ENCODE measurements at regions of chr1 and their contacts with region 1.

Region 1: GRCh38 chr1:108816049-108816893 is 40.6 kb downstream of the AKNAD1 start:
- DNase-seq: peak; percentile 31 to 90
- H3K4me3 ChIP-seq: peak overlapping the region; percentile 48 to 52
- H3K27ac ChIP-seq: peak overlapping the region; percentile 83 to 86
- H3K4me1 ChIP-seq: peaks cover 4 to 17% of the 10 kb centered on the region in 2 donors
- H3K27me3 ChIP-seq: no peaks in the 10 kb centered on the region
- CTCF ChIP-seq: no peak

Region 2: GRCh38 chr1:108691942-108692723 is 124.1 kb before region 1 on chr1 and contains the start of gene PRPF38B:
- intact Hi-C with region 1: loop called (anchors 5 kb)
- DNase-seq: peak; percentile 80 to 97
- H3K4me3 ChIP-seq: peak within 1 kb of the TSS; percentile 82 to 98
- H3K27ac ChIP-seq: peak within 1 kb of the TSS; percentile 92 to 99
- H3K4me1 ChIP-seq: peaks cover 0 to 16% of the 10 kb centered on the region in 2 donors
- H3K27me3 ChIP-seq: no peaks in the 10 kb centered on the region
- CTCF ChIP-seq: no peak
- total RNA-seq, gene PRPF38B: 9.0 TPM

Region 3: DNA sequence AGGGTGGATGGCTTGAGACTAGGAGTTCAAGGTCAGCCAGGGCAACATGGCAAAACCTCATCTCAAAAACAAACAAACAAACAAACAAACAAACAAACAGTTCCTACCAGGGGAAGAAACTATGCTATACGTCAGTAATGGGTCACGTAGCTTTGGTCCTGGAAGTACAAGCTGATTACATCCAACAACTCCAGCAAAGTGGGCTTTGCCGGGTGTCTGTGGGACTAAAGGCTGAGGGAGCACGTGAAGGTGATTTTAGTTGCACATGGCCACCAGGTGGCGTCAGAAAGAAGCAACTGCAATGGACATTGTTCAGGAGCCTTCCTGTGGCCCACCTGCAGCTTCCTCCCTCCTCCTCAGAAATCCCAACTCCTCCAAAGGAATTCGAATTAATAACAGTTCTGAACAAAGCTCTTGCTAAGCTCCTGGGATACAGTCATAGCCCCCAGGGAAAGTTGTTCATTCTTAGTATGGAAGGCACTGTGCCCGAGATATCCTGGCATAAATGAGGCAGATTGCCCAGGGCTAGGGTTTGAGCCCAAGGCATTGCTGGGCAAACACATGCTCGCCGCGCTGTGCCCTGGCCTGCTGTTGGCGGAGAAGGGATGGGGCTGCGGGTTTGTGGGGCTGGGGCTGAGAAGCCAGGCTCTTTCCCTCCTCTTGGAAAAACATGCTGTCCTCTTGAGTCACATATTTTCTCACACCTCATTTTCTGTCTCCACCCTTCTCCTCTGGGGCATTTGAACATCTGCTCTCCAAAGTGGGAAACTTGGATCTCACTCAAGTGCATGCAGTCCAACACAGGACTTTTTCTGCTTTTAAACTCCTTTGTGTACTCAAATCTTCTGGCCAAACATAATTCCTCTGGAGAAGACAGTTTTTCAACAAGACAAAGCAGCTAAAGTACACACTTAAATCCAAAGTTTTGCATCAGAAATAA is 12.0 kb after region 1 on chr1:
- intact Hi-C with region 1: loop called (anchors 1 kb)
- DNase-seq: peak in 1 of 2 donors; percentile 90
- H3K4me3 ChIP-seq: peak overlapping the region in 1 of 2 donors; percentile 28
- H3K27ac ChIP-seq: peak overlapping the region; percentile 79 to 88
- H3K4me1 ChIP-seq: peaks cover 0 to 26% of the 10 kb centered on the region in 2 donors
- H3K27me3 ChIP-seq: no peaks in the 10 kb centered on the region
- CTCF ChIP-seq: peak; percentile 70 to 82 (median 70)

Region 4: DNA sequence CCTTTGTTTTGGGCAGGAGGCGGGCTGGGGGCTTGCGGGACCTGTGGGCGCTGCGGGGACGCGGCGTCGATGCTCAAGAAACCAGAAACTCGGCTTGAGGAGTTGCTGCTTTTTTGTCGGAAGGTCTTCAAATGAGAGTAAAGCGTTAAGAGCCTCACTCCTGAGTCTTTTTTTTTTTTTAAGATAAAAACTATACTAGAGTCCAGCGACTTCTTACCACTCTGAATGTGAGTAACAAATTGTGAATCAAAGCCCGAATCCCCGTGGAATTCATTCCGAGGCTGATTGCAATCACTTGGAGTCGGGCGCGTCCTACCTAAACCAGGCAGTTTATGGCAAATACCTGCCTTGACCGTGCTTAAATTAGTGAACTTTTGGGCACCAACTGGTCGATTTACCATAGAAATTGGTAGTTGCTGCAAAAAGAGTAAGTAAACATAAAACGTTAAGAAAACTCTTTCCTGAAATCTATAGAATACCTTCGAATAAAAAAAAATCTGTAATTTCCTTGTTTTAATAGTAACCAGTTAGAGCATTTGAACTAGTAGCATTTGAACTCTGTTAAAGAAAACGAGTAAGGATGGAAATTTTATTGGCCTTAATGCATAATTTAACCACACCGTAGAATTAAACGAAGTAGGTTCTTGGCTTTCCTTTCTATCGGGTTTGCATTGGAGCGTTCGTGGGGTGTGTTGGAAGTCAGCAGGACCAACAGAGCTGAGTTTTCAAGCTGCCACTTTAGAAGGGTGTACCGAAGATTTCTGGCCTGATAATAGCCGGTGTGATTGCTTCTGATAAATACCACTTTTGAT is 61.3 kb after region 1 on chr1:
- intact Hi-C with region 1: loop called (anchors 2 kb)
- DNase-seq: no peak
- H3K4me3 ChIP-seq: peak overlapping the region; percentile 58 to 87
- H3K27ac ChIP-seq: peak overlapping the region; percentile 58 to 64
- H3K4me1 ChIP-seq: peaks cover 0 to 11% of the 10 kb centered on the region in 2 donors
- H3K27me3 ChIP-seq: no peaks in the 10 kb centered on the region
- CTCF ChIP-seq: no peak

Region 5: DNA sequence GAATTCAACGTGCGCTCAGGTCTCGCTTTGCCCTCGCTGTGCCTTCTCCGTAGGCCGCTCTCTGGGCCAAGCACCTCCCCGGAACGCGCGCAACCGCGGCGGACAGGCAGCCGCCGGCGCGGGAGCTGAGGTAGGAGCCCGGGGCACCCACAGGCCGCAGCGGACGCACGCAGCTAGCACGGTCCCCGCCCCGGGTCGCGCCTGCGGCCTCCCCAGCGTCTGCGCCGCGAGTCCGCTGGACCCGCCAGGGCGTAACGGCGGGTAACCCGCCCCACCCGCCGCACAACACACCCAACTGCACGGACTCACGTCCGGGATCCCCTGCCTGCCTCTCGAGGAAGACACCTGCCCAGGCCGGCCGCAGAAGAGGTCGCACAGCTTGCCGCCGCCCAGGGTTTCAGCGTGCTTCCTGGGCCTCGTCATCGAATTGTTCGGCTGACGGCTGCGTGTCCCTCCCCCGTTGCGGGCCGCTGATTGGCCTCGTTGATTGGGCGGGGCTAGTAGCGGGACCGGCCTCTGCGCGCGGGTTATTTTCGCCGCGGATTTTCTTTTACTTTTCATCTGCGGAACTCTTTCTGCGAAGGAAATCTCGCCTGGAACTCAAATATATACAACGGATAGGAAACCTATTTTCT is 146.9 kb after region 1 on chr1 and contains the start of gene CLCC1:
- intact Hi-C with region 1: loop called (anchors 5 kb)
- DNase-seq: peak; percentile 71 to 96
- H3K4me3 ChIP-seq: peak within 1 kb of the TSS; percentile 76 to 91
- H3K27ac ChIP-seq: peak within 1 kb of the TSS; percentile 93 to 97
- H3K4me1 ChIP-seq: peaks cover 11 to 13% of the 10 kb centered on the region in 2 donors
- H3K27me3 ChIP-seq: no peaks in the 10 kb centered on the region
- CTCF ChIP-seq: no peak
- total RNA-seq, gene CLCC1: 18.1 TPM

Region 6: GRCh38 chr1:109011335-109011734 is 195.1 kb after region 1 on chr1:
- intact Hi-C with region 1: no loop called
- DNase-seq: no peak
- H3K4me3 ChIP-seq: no peak overlapping the region
- H3K27ac ChIP-seq: no peak overlapping the region
- H3K4me1 ChIP-seq: no peaks in the 10 kb centered on the region
- H3K27me3 ChIP-seq: no peaks in the 10 kb centered on the region
- CTCF ChIP-seq: no peak

Region 7: GRCh38 chr1:109133815-109134214 is 317.5 kb after region 1 on chr1:
- intact Hi-C with region 1: no loop called
- DNase-seq: no peak
- H3K4me3 ChIP-seq: no peak overlapping the region
- H3K27ac ChIP-seq: no peak overlapping the region
- H3K4me1 ChIP-seq: no peaks in the 10 kb centered on the region
- H3K27me3 ChIP-seq: no peaks in the 10 kb centered on the region
- CTCF ChIP-seq: no peak

Region 8: GRCh38 chr1:110034451-110035235 is 1218.4 kb after region 1 on chr1 and contains the start of gene STRIP1:
- intact Hi-C with region 1: loop called (anchors 10 kb)
- DNase-seq: peak; percentile 77 to 97
- H3K4me3 ChIP-seq: peak within 1 kb of the TSS; percentile 86 to 96
- H3K27ac ChIP-seq: peak within 1 kb of the TSS; percentile 90 to 92
- H3K4me1 ChIP-seq: peaks cover 0 to 6% of the 10 kb centered on the region in 2 donors
- H3K27me3 ChIP-seq: no peaks in the 10 kb centered on the region
- CTCF ChIP-seq: no peak
- total RNA-seq, gene STRIP1: 20.0 TPM